Keratinocyte (primary cell): ENCODE measurements at regions of chr1 and their contacts with region 1.

Region 1: GRCh38 chr1:185670187-185670627 is 64.0 kb upstream of the HMCN1 start:
- DNase-seq: no peak
- H3K4me3 ChIP-seq: no peak overlapping the region
- H3K27ac ChIP-seq: no peak overlapping the region
- H3K4me1 ChIP-seq: no peaks in the 10 kb centered on the region
- H3K27me3 ChIP-seq: no peaks in the 10 kb centered on the region
- CTCF ChIP-seq: peak; percentile 51 to 59 (median 53)

Region 2: GRCh38 chr1:185291652-185292051 is 378.6 kb before region 1 on chr1:
- dilution Hi-C with region 1: loop called (anchors 10 kb)
- DNase-seq: no peak
- H3K4me3 ChIP-seq: no peak overlapping the region
- H3K27ac ChIP-seq: no peak overlapping the region
- H3K4me1 ChIP-seq: no peaks in the 10 kb centered on the region
- H3K27me3 ChIP-seq: no peaks in the 10 kb centered on the region
- CTCF ChIP-seq: no peak

Region 3: DNA sequence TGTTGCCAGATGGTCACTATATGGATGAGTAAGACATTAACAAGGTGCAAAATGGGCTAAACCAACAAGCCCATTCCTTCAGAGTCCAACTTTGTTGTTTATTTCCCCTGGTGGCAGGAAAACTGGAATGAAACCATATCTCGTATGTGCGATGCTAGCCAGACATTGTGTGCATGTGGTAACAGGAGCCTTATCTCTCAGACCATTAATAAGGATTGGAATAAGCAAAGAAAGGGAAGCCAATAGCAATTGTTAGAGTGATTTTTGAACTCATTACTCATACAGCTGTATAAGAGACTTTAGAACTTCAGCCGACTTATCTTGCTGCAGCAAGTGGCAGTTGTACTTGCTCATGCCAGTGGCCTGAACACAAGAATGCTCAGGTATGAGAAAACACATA is 34.0 kb after region 1 on chr1:
- dilution Hi-C with region 1: no loop called
- DNase-seq: no peak
- H3K4me3 ChIP-seq: no peak overlapping the region
- H3K27ac ChIP-seq: no peak overlapping the region
- H3K4me1 ChIP-seq: no peaks in the 10 kb centered on the region
- H3K27me3 ChIP-seq: no peaks in the 10 kb centered on the region
- CTCF ChIP-seq: no peak

Region 4: GRCh38 chr1:185934476-185935189 is 264.4 kb after region 1 on chr1:
- dilution Hi-C with region 1: no loop called
- DNase-seq: no peak
- H3K4me3 ChIP-seq: no peak overlapping the region
- H3K27ac ChIP-seq: no peak overlapping the region
- H3K4me1 ChIP-seq: no peaks in the 10 kb centered on the region
- H3K27me3 ChIP-seq: no peaks in the 10 kb centered on the region
- CTCF ChIP-seq: no peak